ENCODE measurements at regions of chr4 and their contacts with region 1.

Region 1: DNA sequence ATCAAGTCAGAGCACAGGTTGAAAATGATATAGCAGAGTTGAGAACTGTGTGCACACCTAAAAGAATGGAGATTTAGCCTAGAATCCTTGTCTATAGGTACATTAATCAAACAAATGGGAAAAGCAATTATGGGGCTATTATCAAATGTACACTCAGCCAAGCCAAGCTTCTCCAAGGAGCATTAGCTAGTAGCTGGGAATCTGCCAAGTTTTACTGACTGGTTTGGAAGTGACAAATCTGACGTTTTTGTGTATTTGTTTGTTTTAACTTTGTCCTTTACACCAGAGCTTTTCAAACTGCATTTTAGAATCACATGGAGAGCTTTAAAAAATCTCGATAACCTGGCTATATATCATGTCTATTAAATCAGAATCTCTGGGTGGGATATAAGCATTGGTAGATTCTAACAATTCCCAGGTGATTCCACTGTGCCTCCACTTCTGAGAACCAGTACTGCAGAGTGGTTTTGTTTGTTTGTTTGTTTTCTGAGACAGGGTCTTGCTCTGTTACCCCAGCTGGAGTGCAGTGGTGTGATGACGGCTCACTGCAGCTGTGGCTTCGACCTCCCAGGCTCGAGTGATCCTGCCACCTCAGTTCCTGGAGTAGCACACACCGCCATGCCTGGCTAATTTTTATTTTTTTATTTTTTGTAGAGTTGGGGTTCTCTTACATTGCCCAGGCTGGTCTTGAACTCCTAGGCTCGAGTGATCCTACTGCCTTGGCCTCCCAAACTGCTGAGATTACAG is 279.8 kb downstream of the UNC5C start:
- DNase-seq: no peak
- ATAC-seq: no peak
- H3K4me3 ChIP-seq: no peak overlapping the region
- H3K27ac ChIP-seq: no peak overlapping the region
- H3K4me1 ChIP-seq: no peaks in the 10 kb centered on the region
- H3K27me3 ChIP-seq: no peaks in the 10 kb centered on the region
- CTCF ChIP-seq: no peak

Region 2: DNA sequence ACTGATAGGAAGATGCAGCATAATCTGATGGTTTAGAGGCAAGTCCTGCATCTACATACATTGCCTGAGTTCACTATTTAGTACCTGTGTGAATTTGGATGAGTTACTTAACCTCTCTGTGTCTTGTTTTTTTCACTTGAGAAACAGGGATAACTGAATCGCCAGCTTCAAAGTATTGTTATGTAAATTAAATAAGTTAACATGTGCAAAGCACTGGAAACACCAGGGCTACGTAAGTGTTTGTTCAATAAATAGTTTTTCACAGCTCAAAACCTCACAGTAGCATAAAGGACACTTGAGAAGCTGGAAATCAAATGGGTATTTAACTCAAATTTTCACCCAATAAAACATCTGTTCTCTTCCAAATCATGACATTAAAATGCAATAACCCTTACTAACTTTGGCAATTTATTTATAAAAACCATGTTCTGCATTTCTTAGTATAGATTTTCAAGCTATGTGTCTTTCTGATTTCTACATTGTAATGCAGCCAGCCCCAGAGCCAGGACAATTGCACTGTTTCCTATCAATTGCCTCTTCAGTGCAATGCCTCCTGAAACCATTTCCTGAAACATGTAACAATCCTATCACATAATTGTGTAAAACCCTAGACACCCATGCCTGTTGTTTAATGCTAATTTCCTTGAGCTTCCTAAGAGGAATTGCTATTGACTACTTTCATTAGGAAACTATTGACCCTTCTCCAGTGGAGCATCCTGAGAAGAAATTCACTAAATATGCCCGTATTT is 102.7 kb after region 1 on chr4:
- CTCF ChIA-PET with region 1: interaction called, 12 read pairs
- POLR2A ChIA-PET with region 1: no interaction called
- in situ Hi-C with region 1: no loop called
- intact Hi-C with region 1: no loop called
- DNase-seq: no peak
- ATAC-seq: no peak
- H3K4me3 ChIP-seq: no peak overlapping the region
- H3K27ac ChIP-seq: no peak overlapping the region
- H3K4me1 ChIP-seq: no peaks in the 10 kb centered on the region
- H3K27me3 ChIP-seq: no peaks in the 10 kb centered on the region
- CTCF ChIP-seq: no peak

Measured in Panc1 (cell line).